K562 (cell line): ENCODE measurements at regions of chr2 and their contacts with region 1.

Region 1: DNA sequence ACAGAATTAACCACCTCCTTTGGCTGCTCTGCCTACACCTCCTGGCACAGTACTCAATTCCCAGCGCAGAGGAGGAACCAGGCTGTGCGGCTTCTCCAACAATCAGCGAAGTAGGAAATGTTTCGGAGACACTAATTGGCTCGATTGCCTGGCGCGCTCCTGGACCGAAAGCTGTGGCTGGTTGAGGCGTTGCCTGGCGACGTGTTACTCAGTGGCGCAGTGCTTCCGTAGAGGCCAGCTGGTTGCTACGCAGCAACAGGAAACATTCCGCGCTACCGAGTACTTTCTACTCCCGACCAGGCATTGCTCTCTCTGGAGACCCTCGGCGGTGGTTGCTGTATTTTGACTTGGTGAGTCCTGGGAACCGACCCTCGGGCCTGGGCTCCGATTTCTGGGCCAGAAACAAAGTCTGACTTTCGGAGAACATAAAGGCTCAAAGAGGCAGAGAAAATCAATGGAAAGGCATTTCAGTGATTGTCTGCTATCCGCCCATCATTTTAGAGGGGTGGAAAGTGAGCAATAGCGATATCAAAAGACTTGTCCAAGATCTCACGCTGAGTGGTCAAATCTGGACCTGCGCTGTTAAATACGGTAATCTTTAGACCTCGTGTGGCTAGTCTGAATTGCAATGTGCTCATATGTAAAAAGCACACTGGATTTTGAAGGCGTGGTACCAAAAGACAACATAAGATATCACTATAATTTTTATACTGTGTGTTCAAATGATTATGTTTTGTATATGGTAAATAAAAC is at the start of gene DNAH6:
- DNase-seq: peak in 3 of 4 experiments; percentile 17 to 38 (median 38)
- ATAC-seq: peak; percentile 94
- H3K4me3 ChIP-seq: no peak within 1 kb of the TSS
- H3K27ac ChIP-seq: no peak within 1 kb of the TSS
- H3K4me1 ChIP-seq: no peaks in the 10 kb centered on the region
- H3K27me3 ChIP-seq: peaks cover 9 to 12% of the 10 kb centered on the region in 2 experiments; a peak in 3 of 5 replicates
- CTCF ChIP-seq: no peak
- EP300 ChIP-seq: no peak
- POLR2A ChIP-seq: no peak
- RAD21 ChIP-seq: no peak
- polyA plus RNA-seq, gene DNAH6: 0.01 TPM in 1 of 2 experiments, not detected in the other

Region 2: DNA sequence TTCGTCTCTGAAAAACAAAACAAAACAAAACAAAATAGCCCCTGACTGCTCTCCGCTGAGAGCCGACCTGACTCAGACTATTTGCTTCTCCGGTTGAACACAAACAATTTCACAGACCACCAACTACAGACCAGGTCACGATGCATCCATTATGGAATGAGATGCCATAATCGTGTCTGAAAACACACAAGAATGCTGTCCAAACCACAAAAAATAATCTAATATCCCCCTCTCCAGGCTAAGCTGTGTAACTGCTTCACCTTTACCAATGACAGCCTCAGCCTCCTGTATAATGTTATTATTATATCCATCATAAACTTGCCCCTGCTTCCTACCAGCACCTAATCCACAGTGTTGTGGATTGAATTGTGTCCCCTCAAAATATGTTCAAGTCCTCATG is 114.6 kb after region 1 on chr2:
- CTCF ChIA-PET with region 1: no interaction called
- POLR2A ChIA-PET with region 1: no interaction called
- in situ Hi-C with region 1: no loop called
- intact Hi-C with region 1: loop called (anchors 5 kb)
- DNase-seq: peak; percentile 14 to 42 (median 24)
- ATAC-seq: peak; percentile 83
- H3K4me3 ChIP-seq: no peak overlapping the region
- H3K27ac ChIP-seq: no peak overlapping the region
- H3K4me1 ChIP-seq: no peaks in the 10 kb centered on the region
- H3K27me3 ChIP-seq: no peaks in the 10 kb centered on the region
- CTCF ChIP-seq: peak; percentile 40 to 76 (median 66); a peak in 5 of 6 replicates
- EP300 ChIP-seq: no peak
- POLR2A ChIP-seq: no peak
- RAD21 ChIP-seq: peak; percentile 60 to 76